AG04449 (cell line): ENCODE measurements at regions of chr6 and their contacts with region 1.

Region 1: GRCh38 chr6:3887150-3887700 is 38.1 kb downstream of the FAM50B start:
- DNase-seq: no peak
- H3K4me3 ChIP-seq: no peak overlapping the region
- CTCF ChIP-seq: peak; percentile 55

Region 2: DNA sequence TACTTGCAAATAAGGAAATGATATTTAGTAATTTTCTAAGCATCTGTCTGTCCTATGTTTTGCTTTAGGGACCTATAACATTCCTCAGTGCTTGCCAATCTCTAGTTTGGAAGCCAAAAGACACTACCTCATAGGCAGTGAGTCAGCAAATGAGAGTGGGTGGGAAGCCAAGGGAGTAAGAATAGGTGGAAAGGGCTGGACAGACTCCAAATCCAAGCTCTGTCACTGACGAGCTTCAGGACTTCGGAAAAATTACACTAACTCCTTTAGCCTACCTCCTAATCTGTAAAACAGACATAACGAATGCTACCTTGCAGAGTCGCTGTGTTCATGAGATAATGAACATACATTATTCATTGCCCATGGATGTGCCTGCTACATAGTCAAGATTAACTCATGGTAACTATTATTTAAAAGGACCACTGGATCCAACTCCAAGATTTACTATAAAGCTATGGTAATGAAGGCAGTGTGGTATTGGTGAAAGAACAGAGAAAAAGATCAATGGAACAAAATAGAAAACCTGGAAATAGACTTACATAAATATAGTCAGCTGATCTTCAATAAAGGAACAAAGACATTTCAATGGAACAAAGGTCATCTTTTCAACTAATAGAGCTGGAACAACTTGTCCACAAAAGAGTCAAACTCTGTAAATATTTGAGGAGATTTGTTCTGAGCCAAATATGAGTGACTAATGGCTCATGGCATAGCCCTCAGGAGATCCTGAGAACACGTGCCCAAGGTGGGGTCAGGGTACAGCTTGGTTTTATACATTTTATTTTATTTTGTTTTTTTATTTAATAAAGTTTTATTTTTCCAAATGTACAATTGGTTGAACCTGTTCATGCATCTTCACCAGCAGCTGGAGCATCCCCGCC is 26.1 kb after region 1 on chr6:
- CTCF ChIA-PET with region 1: interaction called, 35 read pairs
- POLR2A ChIA-PET with region 1: interaction called, 3 read pairs
- DNase-seq: peak; percentile 97
- H3K4me3 ChIP-seq: no peak overlapping the region
- CTCF ChIP-seq: no peak